CD4-positive, alpha-beta memory T cell (primary cell): ENCODE measurements at regions of chr15 and their contacts with region 1.

Region 1: GRCh38 chr15:38864827-38865581 is 300.4 kb upstream of the RASGRP1 start:
- DNase-seq: no peak
- H3K4me3 ChIP-seq: no peak overlapping the region
- H3K4me3 Mint-ChIP-seq: no peak overlapping the region
- H3K27ac ChIP-seq: no peak overlapping the region
- H3K27ac Mint-ChIP-seq: no peak overlapping the region
- H3K4me1 ChIP-seq: no peaks in the 10 kb centered on the region
- H3K4me1 Mint-ChIP-seq: no peaks in the 10 kb centered on the region
- H3K27me3 ChIP-seq: no peaks in the 10 kb centered on the region
- H3K27me3 Mint-ChIP-seq: peaks cover 4 to 11% of the 10 kb centered on the region in 2 donors

Region 2: GRCh38 chr15:38842226-38842625 is 22.8 kb before region 1 on chr15:
- CTCF ChIA-PET with region 1: no interaction called
- POLR2A ChIA-PET with region 1: no interaction called
- intact Hi-C with region 1: no loop called
- DNase-seq: no peak
- H3K4me3 ChIP-seq: no peak overlapping the region
- H3K4me3 Mint-ChIP-seq: no peak overlapping the region
- H3K27ac ChIP-seq: no peak overlapping the region
- H3K27ac Mint-ChIP-seq: peak overlapping the region in 1 of 7 donors; percentile 35
- H3K4me1 ChIP-seq: no peaks in the 10 kb centered on the region
- H3K4me1 Mint-ChIP-seq: peaks cover 0 to 4% (median 2%) of the 10 kb centered on the region in 4 donors
- H3K27me3 ChIP-seq: peaks cover 4% of the 10 kb centered on the region
- H3K27me3 Mint-ChIP-seq: peaks cover 6 to 15% of the 10 kb centered on the region in 2 donors

Region 3: GRCh38 chr15:38853608-38854007 is 11.4 kb before region 1 on chr15:
- CTCF ChIA-PET with region 1: interaction called, 11 read pairs
- POLR2A ChIA-PET with region 1: no interaction called
- intact Hi-C with region 1: no loop called
- DNase-seq: peak in 4 of 5 donors; percentile 16 to 26 (median 18)
- H3K4me3 ChIP-seq: no peak overlapping the region
- H3K4me3 Mint-ChIP-seq: no peak overlapping the region
- H3K27ac ChIP-seq: no peak overlapping the region
- H3K27ac Mint-ChIP-seq: no peak overlapping the region
- H3K4me1 ChIP-seq: no peaks in the 10 kb centered on the region
- H3K4me1 Mint-ChIP-seq: no peaks in the 10 kb centered on the region
- H3K27me3 ChIP-seq: peaks cover 5% of the 10 kb centered on the region
- H3K27me3 Mint-ChIP-seq: peaks cover 6 to 10% of the 10 kb centered on the region in 2 donors